ENCODE measurements at regions of chr5 and their contacts with region 1.

Region 1: DNA sequence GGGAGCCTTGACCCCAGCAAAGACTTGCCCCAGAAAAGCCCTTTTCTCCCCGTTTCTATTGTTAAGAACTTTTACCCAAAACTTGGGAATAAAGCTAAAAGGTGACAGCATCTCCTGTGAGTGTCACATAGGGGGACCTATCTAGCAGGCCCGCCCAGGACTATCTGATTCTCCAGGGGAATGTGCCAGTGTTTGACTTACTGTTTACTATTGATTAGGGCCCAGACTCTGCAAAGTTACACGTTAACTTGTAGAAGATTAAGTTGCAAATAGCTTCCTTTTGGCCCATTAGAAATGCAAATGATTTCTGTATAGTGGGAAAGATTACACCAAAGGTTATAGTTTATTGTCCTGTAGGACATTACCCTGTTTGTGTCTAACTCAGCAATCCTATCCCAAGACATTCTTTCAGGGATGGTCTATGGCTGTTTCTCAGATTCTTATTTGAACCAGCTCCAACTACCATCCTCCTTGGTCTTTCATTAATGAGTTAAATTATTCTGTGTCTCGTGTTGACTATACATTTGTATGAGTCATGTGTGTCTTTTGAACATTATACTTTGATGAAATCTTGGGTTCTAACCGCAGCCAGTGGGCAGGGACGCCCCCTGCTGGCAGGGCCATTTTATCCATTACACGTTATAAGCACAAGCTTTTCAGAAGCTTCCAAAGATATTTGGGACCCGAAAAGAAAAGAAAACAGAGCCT is 60.7 kb downstream of the HRH2 start:
- DNase-seq: peak; percentile 57
- ATAC-seq: no peak
- H3K4me3 ChIP-seq: no peak overlapping the region
- H3K27ac ChIP-seq: no peak overlapping the region
- H3K4me1 ChIP-seq: no peaks in the 10 kb centered on the region
- H3K27me3 ChIP-seq: peaks cover 15% of the 10 kb centered on the region; the same call in 1 of the 2 replicates
- CTCF ChIP-seq: peak; percentile 70

Region 2: GRCh38 chr5:175534070-175534932 is 184.3 kb before region 1 on chr5:
- CTCF ChIA-PET with region 1: interaction called, 4 read pairs
- POLR2A ChIA-PET with region 1: no interaction called
- intact Hi-C with region 1: loop called (anchors 5 kb)
- DNase-seq: peak; percentile 78
- ATAC-seq: peak; percentile 97
- H3K4me3 ChIP-seq: no peak overlapping the region
- H3K27ac ChIP-seq: no peak overlapping the region
- H3K4me1 ChIP-seq: no peaks in the 10 kb centered on the region
- H3K27me3 ChIP-seq: no peaks in the 10 kb centered on the region
- CTCF ChIP-seq: peak; percentile 96

Region 3: DNA sequence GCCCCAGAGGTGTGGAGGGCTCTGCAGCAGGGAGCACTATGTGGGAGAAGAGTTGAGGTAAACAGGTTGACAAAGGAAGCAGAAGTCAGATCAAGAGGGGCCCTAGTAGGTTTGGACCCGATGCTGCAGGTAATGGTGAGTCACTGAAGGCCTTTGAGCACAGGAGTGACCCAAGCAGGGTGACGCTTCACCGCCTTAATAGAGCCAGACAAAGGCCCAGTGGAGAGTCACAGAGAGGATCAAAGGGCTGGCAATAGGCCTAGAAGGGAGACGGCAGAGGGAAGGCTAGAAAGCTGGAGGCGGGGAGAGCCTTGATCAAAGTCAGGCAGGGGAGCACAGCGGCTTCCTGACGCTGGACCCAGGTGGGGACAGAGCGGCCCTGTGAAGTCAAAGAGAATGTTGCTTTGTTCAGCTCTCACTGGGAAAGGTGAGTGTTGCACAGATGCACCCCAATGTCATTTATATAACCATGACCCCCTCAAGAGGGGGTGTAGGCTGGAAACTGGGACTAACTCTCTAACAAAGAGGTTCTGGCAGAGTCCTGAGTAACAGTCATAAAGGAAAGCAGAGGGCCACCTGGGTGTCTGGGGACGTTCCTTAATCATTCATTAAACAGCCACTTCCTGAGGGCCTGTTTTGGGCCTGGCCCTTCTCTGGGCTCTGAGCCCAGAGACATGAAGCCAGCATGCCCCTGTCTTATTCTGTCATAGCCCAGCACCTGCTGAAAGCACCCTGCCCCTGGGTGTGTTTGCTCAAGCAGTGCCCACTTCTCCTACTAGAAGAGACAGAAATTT is 143.0 kb after region 1 on chr5:
- CTCF ChIA-PET with region 1: no interaction called
- POLR2A ChIA-PET with region 1: no interaction called
- intact Hi-C with region 1: no loop called
- DNase-seq: no peak
- ATAC-seq: peak; percentile 74
- H3K4me3 ChIP-seq: no peak overlapping the region
- H3K27ac ChIP-seq: no peak overlapping the region
- H3K4me1 ChIP-seq: no peaks in the 10 kb centered on the region
- H3K27me3 ChIP-seq: no peaks in the 10 kb centered on the region; the same call in 1 of the 2 replicates
- CTCF ChIP-seq: no peak

Measured in PC-3 (cell line).